ENCODE measurements at regions of chr2 and their contacts with region 1.

Region 1: GRCh38 chr2:133146895-133147294 is 421.4 kb downstream of the NCKAP5 start:
- DNase-seq: no peak

Region 2: GRCh38 chr2:133097666-133098065 is 49.2 kb before region 1 on chr2:
- intact Hi-C with region 1: no loop called
- DNase-seq: no peak

Region 3: DNA sequence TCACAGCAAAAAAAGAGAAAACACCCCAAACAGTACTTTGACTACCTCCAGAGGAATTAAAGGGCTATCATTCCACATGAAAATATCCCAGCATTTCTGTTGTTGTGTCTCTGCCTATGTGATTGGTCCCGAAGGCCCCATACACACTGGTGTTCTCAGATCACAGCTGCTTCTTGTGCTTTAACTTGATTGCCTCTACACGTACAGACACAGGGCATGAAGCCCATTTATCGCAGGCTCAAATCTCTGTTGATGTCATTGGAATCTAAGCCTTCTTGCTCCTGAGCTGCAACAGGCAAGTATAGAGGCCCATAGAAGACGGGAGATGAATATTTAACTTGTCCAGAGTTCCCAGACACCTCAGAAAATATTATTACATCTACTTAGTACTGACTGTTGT is 16.2 kb after region 1 on chr2:
- intact Hi-C with region 1: loop called in 1 of 2 experiments (anchors 1 kb)
- DNase-seq: no peak